Heart right ventricle (tissue), 16 donors: ENCODE measurements at regions of chr1 and their contacts with region 1.

Region 1: DNA sequence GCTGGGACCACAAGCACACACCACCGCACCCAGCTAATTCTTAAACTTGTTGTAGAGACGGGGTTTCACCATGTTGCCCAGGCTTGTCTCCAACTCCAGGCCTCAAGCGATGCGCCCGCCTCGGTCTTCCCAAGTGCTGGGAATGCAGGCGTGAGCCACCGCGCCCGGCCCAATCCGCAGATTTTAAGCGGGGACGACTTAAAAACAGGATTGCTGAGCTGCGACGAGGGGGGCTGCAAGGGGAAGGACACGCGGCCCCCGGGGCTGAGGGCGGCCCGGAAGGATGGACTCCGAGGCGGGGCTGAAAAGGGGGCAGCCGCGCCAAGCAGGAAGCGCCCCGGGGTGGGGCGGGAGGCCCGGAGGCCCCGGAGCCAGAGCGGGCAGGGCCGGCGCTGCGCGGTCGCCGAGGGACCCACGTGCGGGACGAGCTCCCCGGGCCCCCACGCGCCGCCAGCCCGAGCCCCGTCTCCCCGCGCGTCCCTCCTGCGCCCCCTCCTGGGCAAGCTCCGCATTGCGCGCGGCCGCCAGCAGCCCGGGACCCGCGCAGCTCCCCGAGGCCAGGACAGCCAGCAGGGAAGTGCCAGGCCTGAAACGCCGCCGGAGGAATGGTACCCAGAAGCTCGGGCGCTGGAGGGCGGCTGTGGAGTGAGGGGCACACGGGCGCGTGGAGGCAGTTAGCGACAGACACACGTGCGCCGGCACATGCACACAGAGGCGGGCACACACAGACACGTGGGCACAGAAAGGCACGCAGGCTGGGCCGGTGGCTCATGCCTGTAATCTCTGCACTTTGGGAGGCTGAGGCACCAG is 5.5 kb upstream of the PRKCZ start:
- DNase-seq: peak; percentile 50 to 79
- ATAC-seq: peak; percentile 61 to 83 (median 76)
- H3K4me3 ChIP-seq: peak overlapping the region in 9 of 10 donors; percentile 5 to 40 (median 29)
- H3K27ac ChIP-seq: peak overlapping the region in 1 of 10 donors; percentile 28
- H3K4me1 ChIP-seq: peaks cover 12 to 29% (median 20%) of the 10 kb centered on the region in 9 donors
- H3K27me3 ChIP-seq: peaks cover 0 to 49% (median 40%) of the 10 kb centered on the region in 7 donors
- CTCF ChIP-seq: peak; percentile 70 to 91 (median 82)

Region 2: DNA sequence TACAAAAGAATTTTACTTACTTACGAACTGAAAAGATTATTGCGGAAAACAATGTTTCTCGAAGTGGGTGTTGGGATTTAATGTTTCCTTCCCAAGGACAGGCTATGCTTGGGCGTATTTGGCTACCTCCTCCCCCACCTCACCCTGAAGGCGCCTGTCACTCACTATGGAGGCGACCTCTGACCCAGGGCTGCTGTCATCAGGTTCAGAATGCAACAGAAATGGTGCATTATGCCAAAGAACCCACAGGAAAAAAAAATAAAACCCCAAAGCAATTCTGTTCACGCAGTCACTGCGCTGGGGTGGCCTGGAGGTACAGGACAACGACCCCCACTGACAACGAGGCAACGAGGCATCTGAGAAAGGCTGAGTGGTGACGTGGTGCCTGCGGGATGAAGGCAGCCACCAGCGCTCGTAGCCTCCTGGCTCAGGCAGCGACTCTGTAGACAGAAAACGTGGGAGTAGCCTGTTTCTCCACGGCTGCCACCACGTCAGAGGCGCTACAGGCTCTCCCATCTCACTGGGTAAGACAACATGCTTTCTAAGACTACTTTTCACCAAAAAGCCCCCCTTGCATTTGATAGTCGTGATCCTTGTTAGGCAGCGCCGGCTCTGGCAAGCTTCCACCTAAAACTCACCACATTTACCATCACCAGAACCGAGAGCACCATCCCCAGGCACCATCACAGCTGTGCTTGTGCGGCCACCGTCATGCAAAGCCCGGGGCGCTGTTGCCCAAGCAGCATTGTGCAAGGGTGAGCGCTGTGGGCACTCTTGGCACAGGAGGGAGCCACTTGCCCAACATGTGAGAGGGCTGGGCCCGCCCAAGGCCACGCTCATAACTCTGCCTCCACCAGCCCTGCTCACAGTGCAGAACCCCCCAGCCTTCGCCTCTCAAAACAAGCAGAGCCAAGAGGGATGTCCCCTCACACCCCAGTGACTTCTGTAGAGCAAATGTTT is 280.8 kb before region 1 on chr1:
- intact Hi-C with region 1: no loop called
- DNase-seq: no peak
- ATAC-seq: peak; percentile 38 to 82 (median 55)
- H3K4me3 ChIP-seq: no peak overlapping the region
- H3K27ac ChIP-seq: peak overlapping the region in 1 of 10 donors; percentile 6
- H3K4me1 ChIP-seq: peaks cover 0 to 50% (median 8%) of the 10 kb centered on the region in 9 donors
- H3K27me3 ChIP-seq: no peaks in the 10 kb centered on the region
- CTCF ChIP-seq: peak in 1 of 9 donors; percentile 31

Region 3: GRCh38 chr1:1943834-1944570 is 100.7 kb before region 1 on chr1:
- intact Hi-C with region 1: loop called (anchors 1 to 10 kb)
- DNase-seq: peak; percentile 40 to 62
- ATAC-seq: peak; percentile 68 to 86 (median 76)
- H3K4me3 ChIP-seq: peak overlapping the region in 1 of 10 donors; percentile 12
- H3K27ac ChIP-seq: no peak overlapping the region
- H3K4me1 ChIP-seq: peaks cover 0 to 19% (median 9%) of the 10 kb centered on the region in 9 donors
- H3K27me3 ChIP-seq: peaks cover 0 to 32% (median 10%) of the 10 kb centered on the region in 7 donors
- CTCF ChIP-seq: peak; percentile 72 to 94 (median 89)

Region 4: DNA sequence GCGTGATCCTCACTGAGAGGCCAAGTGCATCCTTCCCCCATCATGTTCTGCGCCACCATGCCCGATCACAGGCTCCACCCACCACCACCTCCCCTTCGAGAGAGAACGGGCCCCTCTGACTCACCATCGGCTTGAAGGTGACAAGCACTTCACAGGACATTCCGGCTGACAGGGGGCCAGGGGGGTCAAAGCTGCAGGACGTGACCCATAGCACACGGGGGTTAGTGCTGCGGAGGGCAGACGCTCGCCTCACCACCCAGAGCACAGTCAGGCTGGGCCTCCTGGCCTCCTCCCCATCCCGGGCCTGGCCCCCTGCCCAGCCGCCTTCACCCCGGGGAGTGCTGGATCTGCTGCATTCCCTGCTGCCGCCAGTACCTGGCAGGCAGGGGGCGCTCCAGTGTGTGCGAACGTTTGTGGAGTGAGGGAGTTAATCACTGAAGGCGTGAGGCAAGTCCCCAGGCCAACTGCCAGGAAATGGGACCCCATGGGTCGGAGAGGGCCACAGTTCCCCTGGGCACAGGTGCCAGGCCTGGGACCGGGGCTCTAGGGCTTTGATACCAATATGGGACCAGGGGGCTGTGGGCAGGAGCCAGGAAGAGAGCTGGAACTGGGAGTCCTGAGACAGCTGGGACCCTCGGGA is 84.8 kb before region 1 on chr1:
- intact Hi-C with region 1: loop called (anchors 1 to 5 kb)
- DNase-seq: peak; percentile 84 to 88
- ATAC-seq: peak; percentile 80 to 95 (median 90)
- H3K4me3 ChIP-seq: peak overlapping the region in 1 of 10 donors; percentile 15
- H3K27ac ChIP-seq: no peak overlapping the region
- H3K4me1 ChIP-seq: peaks cover 0 to 13% (median 4%) of the 10 kb centered on the region in 9 donors
- H3K27me3 ChIP-seq: peaks cover 0 to 74% (median 65%) of the 10 kb centered on the region in 7 donors
- CTCF ChIP-seq: peak; percentile 60 to 88 (median 82)

Region 5: DNA sequence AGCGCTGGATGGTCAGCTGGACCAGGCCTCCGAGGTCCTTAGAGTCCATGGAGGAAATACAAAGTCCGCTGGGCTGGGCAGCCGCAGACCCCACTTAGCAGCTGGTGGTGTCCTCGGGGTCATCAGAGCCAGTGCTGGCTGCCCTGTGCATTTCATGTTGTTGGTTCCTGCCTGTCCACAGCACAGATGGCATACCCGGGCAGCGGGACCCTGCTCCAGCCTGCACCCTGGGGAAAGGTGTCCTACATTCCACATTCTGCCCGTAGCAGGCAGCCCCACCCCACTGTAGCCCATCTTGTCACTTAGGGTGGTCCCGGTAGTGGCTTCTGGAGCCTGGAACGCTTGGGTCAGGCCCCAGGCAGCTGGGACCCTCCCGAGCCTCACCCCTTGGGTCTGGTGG is 25.3 kb after region 1 on chr1:
- intact Hi-C with region 1: loop called in 1 of 10 experiments (anchors 1 kb)
- DNase-seq: peak in 1 of 2 donors; percentile 2
- ATAC-seq: peak in 1 of 8 donors; percentile 9
- H3K4me3 ChIP-seq: no peak overlapping the region
- H3K27ac ChIP-seq: no peak overlapping the region
- H3K4me1 ChIP-seq: no peaks in the 10 kb centered on the region
- H3K27me3 ChIP-seq: peaks cover 0 to 29% (median 11%) of the 10 kb centered on the region in 7 donors
- CTCF ChIP-seq: no peak